ENCODE measurements at regions of chr6 and their contacts with region 1.

Region 1: DNA sequence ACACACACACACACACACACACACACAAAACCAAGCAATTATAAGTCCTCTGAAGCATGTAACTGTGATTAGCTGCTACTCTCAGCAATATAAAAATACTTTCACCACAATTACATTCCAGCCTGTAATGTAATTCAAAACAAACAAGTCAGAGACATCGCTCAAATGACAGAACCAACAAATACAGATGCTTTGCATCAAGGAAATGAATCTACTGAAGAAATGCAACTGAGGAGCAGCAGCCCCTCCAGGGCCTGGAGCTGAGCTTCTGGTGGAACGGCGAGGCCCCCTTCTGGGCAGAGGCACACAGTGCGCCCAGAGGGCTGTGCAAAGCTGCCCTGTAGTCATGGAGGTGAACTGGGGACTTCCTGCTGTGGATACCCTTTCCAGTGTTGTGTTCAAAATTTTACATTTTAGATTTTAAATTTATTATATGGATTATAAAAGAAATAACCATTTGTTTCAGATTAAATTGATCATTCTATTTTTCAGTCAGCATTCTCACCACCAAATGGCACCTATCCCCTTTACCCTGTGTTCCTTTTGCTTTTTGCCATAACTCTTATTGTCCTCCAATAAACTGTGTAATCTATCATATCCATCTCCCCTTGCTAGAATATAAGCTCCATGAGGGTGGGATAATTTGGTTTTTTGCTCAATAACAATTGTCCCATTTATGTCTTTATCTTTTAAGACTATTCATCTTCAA is 23.2 kb downstream of the ADAT2 start:
- DNase-seq: peak in 1 of 2 donors; percentile 83
- H3K4me3 ChIP-seq: no peak overlapping the region
- H3K27ac ChIP-seq: no peak overlapping the region
- H3K4me1 ChIP-seq: peaks cover 0 to 3% of the 10 kb centered on the region in 2 donors
- H3K27me3 ChIP-seq: no peaks in the 10 kb centered on the region
- CTCF ChIP-seq: peak; percentile 87 to 98 (median 96)

Region 2: GRCh38 chr6:142474531-142475289 is 952.6 kb before region 1 on chr6:
- intact Hi-C with region 1: loop called (anchors 2 kb)
- DNase-seq: no peak
- H3K4me3 ChIP-seq: no peak overlapping the region
- H3K27ac ChIP-seq: no peak overlapping the region
- H3K4me1 ChIP-seq: no peaks in the 10 kb centered on the region
- H3K27me3 ChIP-seq: no peaks in the 10 kb centered on the region
- CTCF ChIP-seq: peak; percentile 60 to 84 (median 79)

Region 3: DNA sequence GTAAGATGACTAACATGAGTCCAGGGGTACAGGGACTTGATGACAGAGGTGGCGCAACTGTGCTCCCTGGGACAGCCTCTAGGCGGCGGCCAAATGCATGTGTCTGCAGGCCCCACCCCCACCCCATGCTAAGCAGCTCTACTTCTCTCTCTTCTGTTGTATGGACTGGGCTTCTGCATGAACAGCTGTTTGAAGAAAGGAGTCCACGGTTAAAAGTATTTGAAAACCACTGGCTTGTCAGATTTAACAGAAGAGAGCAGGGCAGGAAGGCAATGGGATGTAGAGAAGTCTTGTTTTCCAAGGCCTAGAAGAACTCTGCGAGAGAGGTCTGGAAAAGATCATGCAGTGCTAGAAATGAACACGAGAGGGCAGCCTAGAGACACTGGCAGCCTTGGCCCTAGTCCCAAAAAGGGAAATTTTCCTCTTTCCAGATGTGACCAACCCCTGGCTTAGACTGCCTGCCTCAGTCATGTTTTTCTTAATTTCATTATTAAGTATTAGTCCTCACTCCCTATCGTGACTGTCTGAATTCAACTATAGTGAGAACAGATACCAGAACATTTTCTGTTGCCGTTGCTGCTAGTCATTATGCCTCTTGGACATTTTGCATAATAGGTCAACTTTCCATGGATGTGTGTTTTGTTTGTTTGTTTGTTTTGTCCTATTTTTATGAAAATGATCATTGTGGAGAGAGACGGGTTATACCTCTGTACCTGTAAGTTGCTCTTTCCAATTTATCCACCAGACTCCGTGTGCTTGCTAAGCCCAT is 860.5 kb before region 1 on chr6:
- intact Hi-C with region 1: loop called (anchors 10 kb)
- DNase-seq: no peak
- H3K4me3 ChIP-seq: no peak overlapping the region
- H3K27ac ChIP-seq: peak overlapping the region in 1 of 2 donors; percentile 66
- H3K4me1 ChIP-seq: peaks cover 3 to 13% of the 10 kb centered on the region in 2 donors
- H3K27me3 ChIP-seq: no peaks in the 10 kb centered on the region
- CTCF ChIP-seq: peak in 2 of 3 experiments; percentile 86 to 87

Region 4: DNA sequence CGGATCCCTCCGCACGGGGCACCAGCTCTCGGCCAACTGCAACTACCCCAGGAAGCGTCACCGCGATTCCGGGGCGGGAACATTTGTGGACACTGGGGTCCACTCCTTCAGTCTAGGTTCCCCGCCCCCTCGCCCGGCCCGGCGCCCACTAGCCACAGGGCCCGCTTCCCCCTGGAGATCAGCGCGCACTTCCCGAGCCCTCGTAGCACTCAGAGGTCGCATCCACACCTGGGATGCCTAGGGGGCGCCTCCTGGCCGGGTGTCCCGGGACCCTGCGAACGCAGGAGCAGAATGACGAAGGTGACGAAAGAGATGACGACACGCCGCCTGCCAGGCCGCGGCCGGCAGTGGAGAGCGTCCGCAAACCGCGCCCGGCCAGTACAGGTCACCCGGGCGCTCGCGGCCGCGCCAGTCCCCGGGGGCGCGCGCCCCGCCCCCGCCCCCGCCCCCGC is 366.9 kb before region 1 on chr6:
- intact Hi-C with region 1: loop called (anchors 5 kb)
- DNase-seq: peak; percentile 75 to 96
- H3K4me3 ChIP-seq: peak overlapping the region; percentile 84 to 89
- H3K27ac ChIP-seq: peak overlapping the region; percentile 89 to 97
- H3K4me1 ChIP-seq: peaks cover 4 to 7% of the 10 kb centered on the region in 2 donors
- H3K27me3 ChIP-seq: no peaks in the 10 kb centered on the region
- CTCF ChIP-seq: peak in 1 of 3 experiments; percentile 6

Region 5: DNA sequence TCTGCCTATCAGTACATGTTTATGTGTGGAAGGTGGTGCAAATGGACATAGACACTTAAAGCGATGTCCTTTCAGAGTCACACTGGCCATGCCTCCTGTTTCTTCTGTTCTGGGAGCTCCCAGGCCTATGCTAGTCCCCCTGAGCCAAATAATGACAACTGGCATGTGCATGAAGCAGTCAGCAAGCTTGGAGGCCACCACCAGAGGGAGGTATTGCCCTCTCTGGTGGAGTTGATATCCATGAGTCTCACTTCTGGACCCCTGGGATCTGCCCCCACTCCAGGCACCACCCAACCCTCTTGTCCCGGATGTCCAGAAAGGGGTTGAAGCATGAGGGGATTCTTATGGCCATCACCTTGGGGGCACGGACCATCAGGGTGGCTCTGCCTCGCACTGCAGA is 194.4 kb before region 1 on chr6:
- intact Hi-C with region 1: loop called (anchors 5 kb)
- DNase-seq: no peak
- H3K4me3 ChIP-seq: no peak overlapping the region
- H3K27ac ChIP-seq: no peak overlapping the region
- H3K4me1 ChIP-seq: no peaks in the 10 kb centered on the region
- H3K27me3 ChIP-seq: no peaks in the 10 kb centered on the region
- CTCF ChIP-seq: peak; percentile 12 to 55 (median 23)

Region 6: DNA sequence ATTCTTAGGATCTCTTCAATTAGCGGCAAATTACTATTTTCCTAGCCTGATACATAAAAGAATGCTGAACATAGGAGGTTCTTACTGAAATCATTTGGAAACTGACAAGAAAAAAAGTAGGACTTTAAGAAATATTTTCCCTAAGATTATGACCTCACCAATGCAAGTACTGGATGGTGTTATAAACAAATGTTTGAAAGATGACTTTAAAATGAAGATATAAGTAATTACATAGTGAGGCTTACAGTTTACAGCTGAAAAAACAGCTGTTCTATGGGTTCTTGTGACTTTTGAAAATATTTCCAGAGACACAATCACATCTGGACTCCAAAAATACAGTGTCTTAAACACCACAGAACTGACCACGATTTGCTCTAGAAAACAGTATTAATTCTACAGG is 41.6 kb before region 1 on chr6:
- intact Hi-C with region 1: no loop called
- DNase-seq: no peak
- H3K4me3 ChIP-seq: no peak overlapping the region
- H3K27ac ChIP-seq: no peak overlapping the region
- H3K4me1 ChIP-seq: no peaks in the 10 kb centered on the region
- H3K27me3 ChIP-seq: no peaks in the 10 kb centered on the region
- CTCF ChIP-seq: no peak

Region 7: DNA sequence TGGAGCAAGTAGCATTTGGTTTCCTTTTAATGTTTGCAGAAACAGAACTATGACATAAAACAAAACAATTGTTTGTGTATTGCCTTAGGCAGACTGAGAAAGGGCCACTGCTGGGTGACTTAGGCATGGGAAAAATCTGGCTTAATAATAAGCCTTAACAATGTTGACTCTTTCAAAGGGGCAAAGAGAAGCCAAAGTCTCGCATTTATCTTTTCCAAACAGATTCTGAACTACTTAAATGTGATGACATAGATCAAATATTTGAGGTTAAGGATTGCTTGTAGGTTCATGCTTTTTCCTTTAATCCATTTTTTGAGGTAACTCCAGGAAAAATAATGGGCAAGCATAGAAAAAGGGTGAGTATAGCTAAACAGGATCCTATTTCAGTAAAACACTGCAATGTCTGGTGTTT is 16.4 kb before region 1 on chr6:
- intact Hi-C with region 1: loop called (anchors 2 kb)
- DNase-seq: no peak
- H3K4me3 ChIP-seq: no peak overlapping the region
- H3K27ac ChIP-seq: peak overlapping the region; percentile 63 to 78
- H3K4me1 ChIP-seq: peaks cover 10 to 21% of the 10 kb centered on the region in 2 donors
- H3K27me3 ChIP-seq: no peaks in the 10 kb centered on the region
- CTCF ChIP-seq: no peak